ENCODE measurements at regions of chr1 and their contacts with region 1.

Region 1: DNA sequence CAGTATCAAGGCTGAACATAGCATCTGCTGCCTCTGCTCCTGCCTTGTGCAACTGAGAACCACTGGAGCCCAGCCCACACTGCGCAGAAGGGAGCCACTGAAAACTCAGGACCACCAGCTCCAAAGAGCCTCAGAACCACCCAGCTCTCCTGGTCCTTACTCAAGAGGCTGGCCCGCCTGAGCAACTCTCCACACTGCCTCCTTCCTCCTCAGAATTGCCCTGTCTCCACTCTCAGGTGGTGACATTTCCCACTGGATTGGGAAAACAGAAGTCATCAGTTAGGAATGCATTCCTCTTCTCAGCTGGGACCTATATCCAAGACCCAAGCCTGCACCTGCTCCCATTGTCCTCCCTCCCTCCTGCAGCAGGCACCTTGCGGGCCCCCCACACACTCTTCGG is 7.0 kb upstream of the KISS1 start:
- DNase-seq: no peak
- ATAC-seq: no peak
- H3K4me3 ChIP-seq: no peak overlapping the region
- H3K27ac ChIP-seq: no peak overlapping the region
- H3K4me1 ChIP-seq: peaks cover 18% of the 10 kb centered on the region
- H3K27me3 ChIP-seq: no peaks in the 10 kb centered on the region
- CTCF ChIP-seq: no peak
- POLR2A ChIP-seq: no peak

Region 2: DNA sequence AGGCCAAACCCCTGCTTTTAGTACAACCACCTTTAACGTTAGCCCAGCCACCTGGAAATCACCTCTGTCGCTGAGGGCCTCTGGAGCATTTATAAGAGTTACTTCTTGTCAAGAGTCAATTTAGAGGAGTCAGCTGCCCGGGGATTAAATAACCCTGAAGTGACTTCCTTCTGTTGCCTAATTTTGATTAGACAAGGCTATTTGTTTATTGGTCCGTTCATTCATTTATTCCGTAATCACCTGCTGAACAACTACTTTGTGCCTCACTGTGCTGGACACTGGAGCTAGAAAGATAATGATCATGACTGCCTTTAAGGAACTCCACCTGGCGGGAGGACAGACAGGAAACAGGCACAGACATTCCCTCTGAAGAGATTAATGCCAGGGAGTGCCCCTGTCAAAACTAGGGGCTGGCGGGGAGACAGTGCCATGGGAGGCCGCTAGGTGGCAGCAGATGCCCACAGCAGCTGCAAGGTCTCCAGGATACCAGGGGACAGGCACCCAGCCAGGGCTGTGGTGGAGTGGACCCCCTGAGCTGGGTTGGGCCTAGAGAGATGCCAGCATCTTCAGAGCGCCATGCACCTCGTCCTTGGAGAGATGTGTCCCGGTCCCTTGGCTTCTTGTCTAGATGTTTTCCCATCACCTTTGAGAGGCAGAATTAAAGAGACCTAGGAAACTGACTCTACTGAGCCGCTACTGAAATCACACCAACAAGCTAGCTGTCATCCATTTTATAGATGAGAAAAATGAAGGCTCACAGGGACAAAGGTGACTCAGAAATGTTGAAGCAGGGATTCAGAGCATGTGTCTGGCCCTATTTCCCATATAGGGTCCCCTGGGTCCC is 40.9 kb before region 1 on chr1:
- intact Hi-C with region 1: loop called (anchors 5 kb)
- DNase-seq: peak; percentile 82 to 90 (median 84)
- ATAC-seq: peak; percentile 94
- H3K4me3 ChIP-seq: no peak overlapping the region
- H3K27ac ChIP-seq: peak overlapping the region in 2 of 4 donors; percentile 13 to 20
- H3K4me1 ChIP-seq: peaks cover 5% of the 10 kb centered on the region
- H3K27me3 ChIP-seq: no peaks in the 10 kb centered on the region
- CTCF ChIP-seq: peak; percentile 96 to 99 (median 98)
- POLR2A ChIP-seq: no peak

Measured in body of pancreas (tissue), 4 donors.